ENCODE measurements at regions of chr1 and their contacts with region 1.

Region 1: DNA sequence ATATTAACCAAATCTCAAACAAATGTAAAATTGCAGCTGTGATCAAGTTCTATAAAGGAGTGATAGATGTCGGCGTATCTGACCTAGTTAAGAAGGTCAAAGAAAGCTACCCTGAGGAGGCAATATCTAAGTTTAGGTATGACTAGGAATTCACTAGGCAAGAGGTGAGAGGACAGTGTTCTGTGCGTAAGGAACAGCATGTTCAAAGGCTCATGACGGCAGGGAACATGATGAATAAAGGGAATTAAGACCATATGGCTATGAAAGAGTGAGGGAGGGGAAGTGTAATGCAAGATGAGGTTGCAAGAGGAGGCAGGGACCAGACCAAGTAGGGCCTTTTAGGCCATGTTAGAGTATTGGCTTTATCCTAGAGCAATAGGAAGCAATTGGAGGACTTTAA is 8.6 kb downstream of the LIX1L start:
- DNase-seq: no peak
- ATAC-seq: peak; percentile 59

Region 2: DNA sequence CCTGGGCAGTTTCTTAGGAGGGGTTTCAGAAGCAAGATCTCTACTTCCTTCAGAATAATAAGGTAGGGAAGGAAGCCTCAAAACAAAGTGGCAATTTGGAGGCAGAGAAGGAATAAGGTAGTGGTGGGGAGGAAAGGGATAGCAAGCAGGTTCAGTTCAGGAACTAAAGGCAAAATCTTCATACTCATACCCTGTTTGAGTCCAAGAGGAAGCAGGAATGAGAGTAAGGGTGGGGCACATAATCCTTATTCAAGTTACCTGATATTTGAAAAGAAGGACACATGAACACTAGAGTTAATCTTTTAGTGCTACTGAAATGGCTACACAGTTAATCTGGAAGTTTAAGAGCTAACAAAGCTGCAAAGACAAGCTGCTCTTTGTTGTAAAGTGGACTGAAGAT is 13.5 kb before region 1 on chr1:
- intact Hi-C with region 1: loop called (anchors 2 kb)
- DNase-seq: no peak
- ATAC-seq: no peak

Region 3: GRCh38 chr1:146012737-146013403 is 63.7 kb after region 1 on chr1:
- intact Hi-C with region 1: no loop called
- DNase-seq: no peak
- ATAC-seq: peak; percentile 34

Region 4: DNA sequence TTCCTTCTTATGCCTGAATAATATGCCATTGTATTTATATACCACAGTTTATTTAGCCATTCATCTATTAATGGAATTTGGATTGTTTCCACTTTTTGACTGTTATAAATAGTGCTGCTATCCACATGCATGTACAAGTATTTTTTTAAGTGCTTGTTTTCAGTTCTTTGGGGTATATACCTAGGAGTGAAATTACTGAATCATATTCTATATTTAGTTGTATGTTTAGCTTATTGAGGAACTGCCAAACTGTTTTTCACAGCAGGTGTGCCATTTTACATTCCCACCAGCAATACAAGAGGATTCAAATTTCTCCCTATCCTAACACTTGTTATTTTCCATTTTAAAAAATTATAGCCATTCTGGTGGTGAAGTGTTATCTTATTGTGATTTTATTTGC is 79.9 kb after region 1 on chr1:
- intact Hi-C with region 1: no loop called
- DNase-seq: no peak
- ATAC-seq: no peak